Mammary epithelial cell (primary cell): ENCODE measurements at regions of chr3 and their contacts with region 1.

Region 1: DNA sequence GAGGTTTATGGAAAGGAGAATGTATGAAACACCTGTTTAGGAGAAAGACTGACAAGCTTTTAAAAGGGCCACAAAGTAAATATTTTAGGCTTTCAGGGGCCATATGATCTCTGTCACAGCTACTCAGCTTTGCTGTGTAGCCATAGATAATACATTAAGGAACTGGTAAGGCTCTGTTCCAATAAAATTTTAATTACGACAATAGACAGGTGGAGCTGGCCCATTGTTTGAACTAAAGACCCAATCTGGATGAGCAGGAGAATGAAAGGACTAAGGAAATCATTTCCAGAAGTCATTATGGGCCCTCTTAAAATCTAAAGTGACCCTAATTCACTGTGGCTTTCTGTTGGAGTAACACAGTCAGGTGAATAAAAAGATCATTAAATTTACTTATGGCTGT is 48.5 kb upstream of the SLC12A8 start:
- DNase-seq: no peak
- H3K4me3 ChIP-seq: no peak overlapping the region
- H3K27ac ChIP-seq: no peak overlapping the region
- H3K4me1 ChIP-seq: no peaks in the 10 kb centered on the region
- H3K27me3 ChIP-seq: no peaks in the 10 kb centered on the region
- CTCF ChIP-seq: no peak

Region 2: DNA sequence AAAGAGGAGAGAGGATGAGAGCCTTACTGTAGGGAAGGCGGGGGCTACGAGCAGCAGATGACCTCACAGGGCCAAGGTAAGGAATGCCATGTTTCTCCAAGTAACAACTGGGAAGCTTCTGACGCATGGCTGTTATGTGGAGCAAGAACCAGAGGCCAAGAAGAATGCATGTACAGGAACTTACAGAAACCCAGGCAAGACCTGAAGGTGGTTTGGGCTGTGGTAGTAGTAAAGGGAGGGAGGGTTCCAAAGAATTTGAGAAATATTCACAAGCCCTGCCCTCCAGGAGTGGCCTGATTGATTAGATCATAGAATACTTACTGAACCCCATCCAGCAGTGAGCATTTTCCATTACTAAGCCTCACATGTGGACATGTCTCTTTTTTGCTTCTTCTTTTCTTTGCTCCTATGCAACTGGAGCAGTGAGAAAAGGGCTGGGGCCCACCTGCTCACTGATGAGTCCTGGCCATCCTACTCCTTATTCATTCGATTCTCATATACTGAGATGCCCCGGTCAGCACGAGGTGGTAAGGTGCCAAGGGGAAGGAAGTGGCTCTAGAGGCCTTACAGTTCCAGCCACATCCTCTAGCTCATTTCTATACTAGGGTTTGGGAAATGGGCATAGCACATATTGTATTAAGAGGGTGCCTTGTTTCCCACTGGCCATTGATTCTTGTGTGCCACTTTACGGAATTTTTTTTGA is 40.2 kb before region 1 on chr3:
- CTCF ChIA-PET with region 1: no interaction called
- dilution Hi-C with region 1: no loop called
- in situ Hi-C with region 1: no loop called
- intact Hi-C with region 1: no loop called
- DNase-seq: no peak
- H3K4me3 ChIP-seq: no peak overlapping the region
- H3K27ac ChIP-seq: no peak overlapping the region
- H3K4me1 ChIP-seq: no peaks in the 10 kb centered on the region
- H3K27me3 ChIP-seq: no peaks in the 10 kb centered on the region
- CTCF ChIP-seq: no peak

Region 3: DNA sequence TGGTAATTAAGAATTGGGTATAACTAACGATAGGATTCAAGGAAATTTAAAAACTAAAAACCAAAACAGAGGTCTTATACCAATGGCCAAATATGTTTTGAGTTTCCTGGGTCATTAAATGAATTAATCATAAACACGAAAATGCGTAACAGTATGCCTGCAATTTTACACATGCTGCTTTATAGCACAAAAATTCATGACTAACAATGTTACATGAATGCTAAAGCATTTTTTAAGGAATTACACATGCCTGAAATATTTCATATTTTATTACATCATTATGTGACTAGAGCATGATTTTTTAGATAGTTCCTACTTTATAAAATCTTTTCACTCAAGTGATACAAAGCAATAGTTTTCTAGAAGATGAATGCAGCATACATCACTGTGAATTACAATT is 39.4 kb after region 1 on chr3:
- CTCF ChIA-PET with region 1: no interaction called
- dilution Hi-C with region 1: loop called (anchors 5 kb)
- in situ Hi-C with region 1: no loop called
- intact Hi-C with region 1: no loop called
- DNase-seq: peak; percentile 56
- H3K4me3 ChIP-seq: no peak overlapping the region
- H3K27ac ChIP-seq: peak overlapping the region; percentile 54
- H3K4me1 ChIP-seq: peaks cover 8% of the 10 kb centered on the region
- H3K27me3 ChIP-seq: no peaks in the 10 kb centered on the region
- CTCF ChIP-seq: no peak

Region 4: DNA sequence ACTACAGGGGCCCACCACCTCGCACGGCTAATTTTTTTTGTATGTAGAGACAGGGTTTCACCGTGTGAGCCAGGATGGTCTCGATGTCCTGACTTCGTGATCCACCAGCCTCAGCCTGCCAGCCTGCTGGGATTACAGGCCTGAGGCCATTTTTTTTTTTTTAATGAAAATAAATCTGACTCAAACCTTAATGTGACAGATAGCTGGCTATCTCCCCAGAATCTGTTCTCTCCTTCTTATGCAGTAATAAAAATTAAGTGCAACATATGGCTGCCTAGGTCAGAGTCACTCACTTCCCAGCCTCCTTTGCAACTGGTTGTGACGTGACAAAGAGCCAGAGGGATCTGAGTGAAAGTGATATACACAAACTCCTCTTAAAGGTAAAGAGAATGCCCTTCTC is 61.1 kb after region 1 on chr3:
- CTCF ChIA-PET with region 1: no interaction called
- dilution Hi-C with region 1: no loop called
- in situ Hi-C with region 1: no loop called
- intact Hi-C with region 1: no loop called
- DNase-seq: peak; percentile 25
- H3K4me3 ChIP-seq: no peak overlapping the region
- H3K27ac ChIP-seq: no peak overlapping the region
- H3K4me1 ChIP-seq: peaks cover 13% of the 10 kb centered on the region
- H3K27me3 ChIP-seq: no peaks in the 10 kb centered on the region
- CTCF ChIP-seq: no peak

Region 5: DNA sequence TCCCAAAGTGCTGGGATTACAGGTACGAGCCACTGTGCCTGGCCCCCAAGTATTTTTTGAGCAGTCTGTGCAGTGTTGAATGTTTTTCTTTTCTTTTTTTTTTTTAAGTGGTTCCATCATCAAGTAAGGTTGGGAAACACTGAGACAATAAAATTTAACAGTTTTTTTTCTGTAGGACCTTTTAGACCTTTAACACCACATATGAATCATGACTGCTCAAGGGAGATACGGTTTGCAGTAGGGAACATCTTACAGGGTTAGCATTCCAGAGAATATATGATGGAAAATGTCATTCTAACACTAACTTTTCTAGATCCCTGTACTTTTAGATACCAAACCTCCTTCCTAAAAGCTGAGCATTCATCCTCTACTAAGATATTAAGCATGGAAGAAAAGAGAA is 217.3 kb after region 1 on chr3:
- CTCF ChIA-PET with region 1: no interaction called
- dilution Hi-C with region 1: no loop called
- in situ Hi-C with region 1: no loop called
- intact Hi-C with region 1: no loop called
- DNase-seq: no peak
- H3K4me3 ChIP-seq: no peak overlapping the region
- H3K27ac ChIP-seq: no peak overlapping the region
- H3K4me1 ChIP-seq: no peaks in the 10 kb centered on the region
- H3K27me3 ChIP-seq: no peaks in the 10 kb centered on the region
- CTCF ChIP-seq: no peak